Activated naive CD4-positive, alpha-beta T cell treated with anti-CD3 and anti-CD28 coated beads for 36 hours (primary cell): ENCODE measurements at regions of chr13 and their contacts with region 1.

Region 1: DNA sequence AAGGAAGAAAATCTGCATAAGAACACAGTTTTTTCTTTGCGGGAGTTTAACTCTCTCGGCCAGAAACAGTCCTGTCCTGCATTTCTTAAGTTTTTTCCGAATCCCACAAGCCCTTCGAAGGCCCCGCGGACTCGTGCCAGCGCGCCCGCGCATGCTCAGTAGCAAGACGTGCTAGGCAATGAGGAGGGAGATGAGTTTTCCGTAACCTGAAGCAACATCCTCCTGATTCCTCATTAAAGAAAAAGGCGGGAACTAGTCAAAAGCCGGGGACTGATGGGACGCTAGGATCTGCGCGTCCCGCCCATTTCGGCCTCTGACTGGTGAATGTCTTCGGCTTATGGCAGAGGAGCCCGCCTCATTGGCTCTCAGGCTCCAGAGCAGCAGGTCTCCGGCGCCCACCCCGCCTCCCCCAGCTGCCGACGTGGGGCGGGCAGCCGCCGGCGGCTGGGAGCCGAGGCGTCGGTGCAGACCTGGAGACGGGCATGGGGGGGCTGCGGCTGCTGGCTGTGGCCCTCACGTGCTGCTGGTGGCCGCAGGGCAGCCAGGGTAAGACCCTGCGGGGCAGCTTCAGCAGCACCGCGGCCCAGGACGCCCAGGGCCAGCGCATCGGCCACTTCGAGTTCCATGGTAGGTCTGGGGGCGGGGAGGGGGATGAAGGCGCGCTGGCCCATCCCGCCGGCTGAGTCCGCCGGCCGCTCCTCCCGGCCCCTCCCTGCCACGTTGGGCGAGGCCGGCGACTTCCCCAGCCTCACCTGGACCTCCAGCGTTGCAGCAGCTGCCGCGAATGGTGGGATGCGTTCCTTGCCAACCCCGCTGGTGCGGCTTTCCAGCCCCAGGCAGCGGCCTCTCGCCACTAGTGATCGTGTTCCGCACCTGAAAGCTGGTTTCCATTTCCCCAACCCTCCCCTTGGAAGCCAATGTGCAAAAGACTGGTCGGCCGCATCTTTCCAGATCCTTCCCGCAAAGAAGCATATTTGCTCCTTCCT is at the start of gene GPR180:
- DNase-seq: peak; percentile 94
- H3K4me3 Mint-ChIP-seq: peak within 1 kb of the TSS; percentile 86
- H3K27ac Mint-ChIP-seq: peak within 1 kb of the TSS; percentile 84
- H3K4me1 Mint-ChIP-seq: peaks cover 34% of the 10 kb centered on the region
- H3K27me3 Mint-ChIP-seq: no peaks in the 10 kb centered on the region
- total RNA-seq, gene GPR180: 5.6 to 5.7 TPM

Region 2: DNA sequence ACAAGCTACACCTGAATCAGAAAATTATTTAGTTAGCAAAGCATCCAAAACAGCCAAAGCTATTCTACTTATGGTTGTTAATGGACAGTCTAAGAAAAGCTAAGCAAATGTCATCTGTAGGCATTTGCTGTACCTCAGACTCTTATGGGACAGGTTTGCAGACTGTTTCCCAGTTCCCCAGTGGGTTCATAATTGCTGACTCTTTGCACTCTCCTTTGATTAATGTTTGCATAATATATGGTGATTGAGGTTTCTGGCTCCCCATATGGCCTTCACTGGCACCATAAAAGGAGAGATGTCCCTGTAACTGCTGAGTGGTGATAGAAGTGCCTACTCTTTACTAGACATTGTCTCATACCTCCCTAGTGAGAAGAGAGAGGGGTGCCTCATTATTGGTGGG is 1233.0 kb before region 1 on chr13:
- CTCF ChIA-PET with region 1: no interaction called
- intact Hi-C with region 1: no loop called
- DNase-seq: no peak
- H3K4me3 Mint-ChIP-seq: no peak overlapping the region
- H3K27ac Mint-ChIP-seq: no peak overlapping the region
- H3K4me1 Mint-ChIP-seq: no peaks in the 10 kb centered on the region
- H3K27me3 Mint-ChIP-seq: peaks cover 9% of the 10 kb centered on the region

Region 3: DNA sequence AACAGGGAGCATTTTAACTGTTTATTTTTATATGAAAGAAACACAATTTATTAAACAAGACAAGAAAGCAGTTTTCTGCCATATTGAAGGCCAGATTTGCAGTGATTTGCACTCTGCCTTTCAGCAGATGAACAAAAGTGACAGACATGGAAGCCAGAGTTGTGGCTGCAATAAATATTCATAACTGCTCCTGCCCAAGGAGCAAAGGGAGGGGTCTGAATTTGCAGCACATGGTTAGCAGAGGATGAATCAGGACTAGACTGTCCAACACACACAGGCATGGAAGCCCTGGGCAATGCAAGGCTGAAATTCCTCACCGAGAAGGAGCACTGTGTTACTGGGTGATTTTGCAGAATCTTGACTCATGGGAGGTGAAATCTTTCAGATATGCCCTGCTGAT is 540.4 kb before region 1 on chr13:
- CTCF ChIA-PET with region 1: no interaction called
- intact Hi-C with region 1: no loop called
- DNase-seq: no peak
- H3K4me3 Mint-ChIP-seq: no peak overlapping the region
- H3K27ac Mint-ChIP-seq: no peak overlapping the region
- H3K4me1 Mint-ChIP-seq: no peaks in the 10 kb centered on the region
- H3K27me3 Mint-ChIP-seq: peaks cover 3% of the 10 kb centered on the region

Region 4: GRCh38 chr13:94537740-94538630 is 63.8 kb before region 1 on chr13:
- CTCF ChIA-PET with region 1: no interaction called
- intact Hi-C with region 1: no loop called
- DNase-seq: no peak
- H3K4me3 Mint-ChIP-seq: no peak overlapping the region
- H3K27ac Mint-ChIP-seq: no peak overlapping the region
- H3K4me1 Mint-ChIP-seq: peaks cover 11% of the 10 kb centered on the region
- H3K27me3 Mint-ChIP-seq: no peaks in the 10 kb centered on the region

Region 5: GRCh38 chr13:94549232-94550061 is 52.3 kb before region 1 on chr13:
- CTCF ChIA-PET with region 1: no interaction called
- intact Hi-C with region 1: loop called (anchors 1 kb)
- DNase-seq: peak; percentile 93
- H3K4me3 Mint-ChIP-seq: peak overlapping the region; percentile 75
- H3K27ac Mint-ChIP-seq: peak overlapping the region; percentile 88
- H3K4me1 Mint-ChIP-seq: peaks cover 5% of the 10 kb centered on the region
- H3K27me3 Mint-ChIP-seq: peaks cover 3% of the 10 kb centered on the region

Region 6: GRCh38 chr13:94620286-94620896 is 18.7 kb after region 1 on chr13:
- CTCF ChIA-PET with region 1: interaction called, 23 read pairs
- intact Hi-C with region 1: no loop called
- DNase-seq: peak; percentile 41
- H3K4me3 Mint-ChIP-seq: no peak overlapping the region
- H3K27ac Mint-ChIP-seq: no peak overlapping the region
- H3K4me1 Mint-ChIP-seq: peaks cover 7% of the 10 kb centered on the region
- H3K27me3 Mint-ChIP-seq: no peaks in the 10 kb centered on the region